ENCODE measurements at regions of chr18 and their contacts with region 1.

Region 1: GRCh38 chr18:50218432-50219197 is 23.7 kb upstream of the MYO5B start:
- DNase-seq: peak; percentile 47 to 65 (median 58)
- ATAC-seq: peak; percentile 47
- H3K4me3 ChIP-seq: no peak overlapping the region
- H3K27ac ChIP-seq: no peak overlapping the region
- H3K4me1 ChIP-seq: no peaks in the 10 kb centered on the region
- H3K27me3 ChIP-seq: no peaks in the 10 kb centered on the region
- CTCF ChIP-seq: peak; percentile 15 to 60 (median 54)
- POLR2A ChIP-seq: no peak

Region 2: GRCh38 chr18:50356036-50356945 is 137.7 kb after region 1 on chr18:
- intact Hi-C with region 1: loop called (anchors 5 kb)
- DNase-seq: peak in 1 of 4 donors; percentile 32
- ATAC-seq: peak; percentile 56
- H3K4me3 ChIP-seq: no peak overlapping the region
- H3K27ac ChIP-seq: no peak overlapping the region
- H3K4me1 ChIP-seq: peaks cover 13% of the 10 kb centered on the region
- H3K27me3 ChIP-seq: no peaks in the 10 kb centered on the region
- CTCF ChIP-seq: no peak
- POLR2A ChIP-seq: no peak

Region 3: DNA sequence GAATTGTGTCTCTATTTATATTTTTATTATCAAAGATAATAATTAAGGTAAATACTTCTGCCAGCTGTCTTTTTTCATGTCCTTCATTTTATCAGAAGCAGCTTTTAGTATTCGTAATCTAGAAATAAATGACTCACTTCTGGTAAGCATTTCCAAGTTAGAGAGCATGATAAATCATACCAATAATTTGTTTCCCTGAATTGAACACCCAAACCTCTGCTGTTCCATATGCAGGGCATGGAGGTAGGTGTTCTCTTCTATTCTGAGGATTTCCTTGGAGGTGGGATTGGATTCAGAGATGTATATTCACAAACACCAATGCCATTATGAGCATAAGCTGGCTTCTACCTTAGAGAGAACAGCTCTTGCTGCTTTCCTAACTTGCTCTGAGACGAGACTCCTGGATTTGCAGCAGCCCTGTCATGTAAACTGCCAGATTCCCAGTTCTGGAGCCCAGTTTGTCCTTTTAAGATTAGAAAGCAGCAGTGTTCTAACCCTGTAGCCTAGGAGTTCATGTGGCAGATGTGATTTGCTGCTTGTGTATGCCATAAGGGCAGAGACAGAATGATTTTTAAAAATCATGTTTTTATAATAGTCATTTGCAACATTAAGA is 203.8 kb after region 1 on chr18:
- intact Hi-C with region 1: no loop called
- DNase-seq: peak in 3 of 4 donors; percentile 17 to 19 (median 19)
- ATAC-seq: peak; percentile 31
- H3K4me3 ChIP-seq: no peak overlapping the region
- H3K27ac ChIP-seq: peak overlapping the region; percentile 48 to 86 (median 82)
- H3K4me1 ChIP-seq: peaks cover 41% of the 10 kb centered on the region
- H3K27me3 ChIP-seq: no peaks in the 10 kb centered on the region
- CTCF ChIP-seq: no peak
- POLR2A ChIP-seq: peak in 2 of 3 donors; percentile 27 to 46

Region 4: GRCh38 chr18:50432915-50433314 is 214.3 kb after region 1 on chr18:
- intact Hi-C with region 1: loop called (anchors 10 kb)
- DNase-seq: no peak
- ATAC-seq: no peak
- H3K4me3 ChIP-seq: no peak overlapping the region
- H3K27ac ChIP-seq: no peak overlapping the region
- H3K4me1 ChIP-seq: no peaks in the 10 kb centered on the region
- H3K27me3 ChIP-seq: no peaks in the 10 kb centered on the region
- CTCF ChIP-seq: no peak
- POLR2A ChIP-seq: no peak